Activated B cell treated with CpG ODN at 0.5 μM for 24 hours (primary cell): ENCODE measurements at regions of chr15 and their contacts with region 1.

Region 1: GRCh38 chr15:42273102-42273899 is at the starts of genes GANC and TMEM87A:
- DNase-seq: peak; percentile 85
- ATAC-seq: peak; percentile 89
- H3K4me3 Mint-ChIP-seq: peak within 1 kb of the TSS; percentile 100
- H3K27ac Mint-ChIP-seq: peak within 1 kb of the TSS; percentile 100
- H3K4me1 Mint-ChIP-seq: peaks cover 50% of the 10 kb centered on the region
- H3K27me3 Mint-ChIP-seq: no peaks in the 10 kb centered on the region
- CTCF ChIP-seq: no peak
- total RNA-seq, gene GANC: 59.9 and 72.2 TPM in 2 replicates
- total RNA-seq, gene TMEM87A: 45.4 and 52.6 TPM in 2 replicates

Region 2: DNA sequence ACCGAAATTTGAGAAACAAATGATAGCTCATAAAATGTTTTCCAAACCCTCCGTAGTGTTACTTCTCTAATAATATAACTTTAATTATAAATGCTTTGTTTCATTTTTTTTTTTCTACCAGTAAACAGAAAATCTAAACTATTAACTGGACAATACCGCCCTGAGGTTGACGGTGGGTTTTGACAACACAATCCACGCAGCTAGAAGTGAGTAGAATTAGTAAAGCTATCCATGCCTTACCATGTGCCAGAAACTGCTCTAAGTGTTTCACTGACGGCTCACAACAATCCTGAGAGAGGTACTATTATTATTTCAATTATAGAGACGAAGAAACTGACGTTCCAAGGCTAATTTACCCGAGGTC is 871.4 kb before region 1 on chr15:
- CTCF ChIA-PET with region 1: no interaction called
- POLR2A ChIA-PET with region 1: no interaction called
- intact Hi-C with region 1: loop called (anchors 5 kb)
- DNase-seq: no peak
- ATAC-seq: no peak
- H3K4me3 Mint-ChIP-seq: peak overlapping the region; percentile 93
- H3K27ac Mint-ChIP-seq: peak overlapping the region; percentile 94
- H3K4me1 Mint-ChIP-seq: peaks cover 16% of the 10 kb centered on the region
- H3K27me3 Mint-ChIP-seq: no peaks in the 10 kb centered on the region
- CTCF ChIP-seq: no peak

Region 3: DNA sequence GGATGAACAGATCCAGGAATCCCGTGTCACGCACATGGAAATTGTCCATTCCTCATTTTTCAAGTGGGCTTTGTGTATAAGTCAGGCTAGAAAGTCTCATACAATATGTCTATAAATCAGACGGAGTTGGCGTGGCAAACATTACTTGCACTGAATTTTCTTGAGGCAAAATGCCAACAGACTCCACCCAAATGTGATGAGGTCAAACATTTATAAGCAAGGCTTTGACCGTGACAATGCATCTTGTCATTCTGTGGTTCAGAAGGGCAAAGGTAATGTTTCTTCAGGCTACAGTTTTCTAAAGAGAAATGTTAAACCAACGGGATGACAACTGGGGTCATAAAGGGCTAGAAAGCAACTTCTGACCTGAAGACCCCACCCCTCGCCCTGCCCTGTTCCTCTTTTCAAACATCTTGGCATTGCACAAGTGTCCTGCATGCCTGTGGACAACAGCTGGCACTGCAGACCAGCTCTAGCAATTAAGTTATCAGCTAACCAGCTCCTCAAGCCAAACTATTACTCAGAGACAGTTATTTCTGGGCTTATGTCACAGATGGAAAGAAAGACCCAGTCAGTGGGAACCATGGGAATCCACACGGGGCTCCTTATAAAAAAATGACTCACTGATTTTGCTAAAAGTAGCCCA is 343.0 kb before region 1 on chr15:
- CTCF ChIA-PET with region 1: no interaction called
- POLR2A ChIA-PET with region 1: no interaction called
- intact Hi-C with region 1: no loop called
- DNase-seq: no peak
- ATAC-seq: no peak
- H3K4me3 Mint-ChIP-seq: peak overlapping the region; percentile 65
- H3K27ac Mint-ChIP-seq: peak overlapping the region; percentile 88
- H3K4me1 Mint-ChIP-seq: peaks cover 86% of the 10 kb centered on the region
- H3K27me3 Mint-ChIP-seq: no peaks in the 10 kb centered on the region
- CTCF ChIP-seq: no peak

Region 4: GRCh38 chr15:42207674-42208579 is 65.4 kb before region 1 on chr15 and contains the start of gene VPS39:
- CTCF ChIA-PET with region 1: no interaction called
- POLR2A ChIA-PET with region 1: interaction called, 19 read pairs
- intact Hi-C with region 1: loop called (anchors 1 kb)
- DNase-seq: peak; percentile 77
- ATAC-seq: peak; percentile 98
- H3K4me3 Mint-ChIP-seq: peak within 1 kb of the TSS; percentile 96
- H3K27ac Mint-ChIP-seq: peak within 1 kb of the TSS; percentile 92
- H3K4me1 Mint-ChIP-seq: peaks cover 38% of the 10 kb centered on the region
- H3K27me3 Mint-ChIP-seq: no peaks in the 10 kb centered on the region
- CTCF ChIP-seq: no peak
- total RNA-seq, gene VPS39: 86.1 and 102 TPM in 2 replicates

Region 5: DNA sequence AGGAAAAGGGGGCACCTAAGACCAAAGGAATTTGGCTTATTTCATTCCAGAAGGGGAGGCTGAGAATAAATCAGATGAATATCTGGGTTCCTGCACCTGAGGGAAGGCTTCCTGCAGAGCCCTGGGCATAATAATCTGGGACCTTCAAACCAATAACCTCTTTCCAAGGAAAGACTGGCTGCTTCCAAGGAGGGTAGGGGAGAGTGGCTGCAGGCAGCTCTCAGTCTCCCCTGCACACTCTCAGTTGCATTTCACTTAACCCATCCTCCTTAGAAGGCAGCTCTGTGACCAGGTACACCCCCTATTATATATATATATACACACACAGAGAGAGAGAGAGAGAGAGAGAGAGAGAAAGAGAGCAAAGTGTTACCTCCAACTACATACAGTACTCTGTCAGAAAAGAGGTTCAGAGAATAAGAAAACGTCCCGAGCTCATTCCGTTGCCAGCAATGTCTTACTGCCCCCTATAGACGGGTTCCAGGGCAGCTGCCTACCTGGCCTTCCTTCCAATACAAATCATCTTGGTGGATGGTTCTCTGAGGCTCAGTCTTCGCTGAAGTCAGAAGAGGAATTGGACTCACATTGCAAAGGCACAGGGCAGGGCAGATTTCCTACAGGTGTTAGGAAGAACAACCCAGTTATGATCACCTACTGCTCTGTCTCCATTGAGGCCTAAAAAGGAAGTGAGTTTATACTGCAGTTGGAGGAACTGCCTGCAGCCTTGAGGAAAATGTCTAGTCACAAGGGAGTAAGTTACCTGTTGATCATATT is 112.1 kb after region 1 on chr15:
- CTCF ChIA-PET with region 1: no interaction called
- POLR2A ChIA-PET with region 1: no interaction called
- intact Hi-C with region 1: no loop called
- DNase-seq: no peak
- ATAC-seq: no peak
- H3K4me3 Mint-ChIP-seq: no peak overlapping the region
- H3K27ac Mint-ChIP-seq: no peak overlapping the region
- H3K4me1 Mint-ChIP-seq: no peaks in the 10 kb centered on the region
- H3K27me3 Mint-ChIP-seq: no peaks in the 10 kb centered on the region
- CTCF ChIP-seq: no peak

Region 6: DNA sequence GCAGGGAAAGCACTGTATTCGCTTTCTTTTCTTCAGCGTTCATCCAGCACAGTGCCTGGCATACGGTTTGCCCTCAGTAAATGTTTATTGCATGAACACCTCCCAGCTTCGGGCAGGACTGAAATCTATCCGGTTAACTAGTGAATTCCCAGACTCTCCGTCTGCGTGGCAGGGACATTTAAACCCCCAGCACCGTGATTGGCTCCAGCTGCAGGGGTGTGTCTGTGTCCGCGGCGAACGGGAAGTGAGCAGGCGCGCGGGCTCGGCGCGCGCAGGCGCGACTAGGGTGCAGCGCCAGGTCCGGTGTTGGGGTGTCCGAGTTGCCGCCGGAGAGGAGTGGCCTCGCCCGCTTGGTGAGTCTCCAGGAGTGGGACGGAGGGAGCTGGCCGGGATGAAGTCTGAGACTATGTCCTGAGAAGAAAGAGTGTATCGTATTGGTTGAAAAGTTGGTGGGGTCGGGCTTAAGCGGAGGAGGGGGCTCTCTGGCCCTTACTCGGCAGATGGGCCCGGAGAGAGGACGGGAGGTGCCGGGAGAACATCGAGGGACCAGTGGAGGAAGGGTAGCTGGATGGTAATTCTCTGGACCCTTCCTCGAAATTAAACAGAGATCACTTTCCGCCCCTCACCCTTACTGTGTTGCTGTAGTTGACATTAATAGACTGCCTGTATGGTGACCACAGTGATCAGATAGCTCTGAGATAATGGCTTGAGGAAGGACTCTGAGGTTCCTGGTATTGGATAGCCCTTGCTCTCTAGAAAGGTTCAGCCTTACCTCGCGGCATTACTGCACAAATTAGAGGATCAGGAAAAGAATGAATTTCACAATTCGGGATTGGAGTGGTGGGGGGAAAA is 222.3 kb after region 1 on chr15 and contains the start of gene SNAP23:
- CTCF ChIA-PET with region 1: interaction called, 4 read pairs
- POLR2A ChIA-PET with region 1: interaction called, 9 read pairs
- intact Hi-C with region 1: loop called (anchors 2 kb)
- DNase-seq: peak; percentile 78
- ATAC-seq: peak; percentile 86
- H3K4me3 Mint-ChIP-seq: peak within 1 kb of the TSS; percentile 100
- H3K27ac Mint-ChIP-seq: peak within 1 kb of the TSS; percentile 97
- H3K4me1 Mint-ChIP-seq: peaks cover 83% of the 10 kb centered on the region
- H3K27me3 Mint-ChIP-seq: no peaks in the 10 kb centered on the region
- CTCF ChIP-seq: no peak
- total RNA-seq, gene SNAP23: 111 and 123 TPM in 2 replicates

Region 7: GRCh38 chr15:42920519-42921227 is 647.4 kb after region 1 on chr15 and contains the start of gene TTBK2:
- CTCF ChIA-PET with region 1: no interaction called
- POLR2A ChIA-PET with region 1: no interaction called
- intact Hi-C with region 1: loop called (anchors 2 kb)
- DNase-seq: peak; percentile 88
- ATAC-seq: peak; percentile 94
- H3K4me3 Mint-ChIP-seq: peak within 1 kb of the TSS; percentile 98
- H3K27ac Mint-ChIP-seq: peak within 1 kb of the TSS; percentile 91
- H3K4me1 Mint-ChIP-seq: peaks cover 34% of the 10 kb centered on the region
- H3K27me3 Mint-ChIP-seq: no peaks in the 10 kb centered on the region
- CTCF ChIP-seq: no peak
- total RNA-seq, gene TTBK2: 16.2 and 19.8 TPM in 2 replicates